Activated naive CD4-positive, alpha-beta T cell treated with anti-CD3 and anti-CD28 coated beads for 36 hours (primary cell): ENCODE measurements at regions of chr12 and their contacts with region 1.

Region 1: GRCh38 chr12:112978163-112979040 is at the start of gene OAS2:
- DNase-seq: peak; percentile 93
- H3K4me3 Mint-ChIP-seq: peak within 1 kb of the TSS; percentile 81
- H3K27ac Mint-ChIP-seq: peak within 1 kb of the TSS; percentile 100
- H3K4me1 Mint-ChIP-seq: peaks cover 36% of the 10 kb centered on the region
- H3K27me3 Mint-ChIP-seq: no peaks in the 10 kb centered on the region
- total RNA-seq, gene OAS2: 191 to 196 TPM

Region 2: DNA sequence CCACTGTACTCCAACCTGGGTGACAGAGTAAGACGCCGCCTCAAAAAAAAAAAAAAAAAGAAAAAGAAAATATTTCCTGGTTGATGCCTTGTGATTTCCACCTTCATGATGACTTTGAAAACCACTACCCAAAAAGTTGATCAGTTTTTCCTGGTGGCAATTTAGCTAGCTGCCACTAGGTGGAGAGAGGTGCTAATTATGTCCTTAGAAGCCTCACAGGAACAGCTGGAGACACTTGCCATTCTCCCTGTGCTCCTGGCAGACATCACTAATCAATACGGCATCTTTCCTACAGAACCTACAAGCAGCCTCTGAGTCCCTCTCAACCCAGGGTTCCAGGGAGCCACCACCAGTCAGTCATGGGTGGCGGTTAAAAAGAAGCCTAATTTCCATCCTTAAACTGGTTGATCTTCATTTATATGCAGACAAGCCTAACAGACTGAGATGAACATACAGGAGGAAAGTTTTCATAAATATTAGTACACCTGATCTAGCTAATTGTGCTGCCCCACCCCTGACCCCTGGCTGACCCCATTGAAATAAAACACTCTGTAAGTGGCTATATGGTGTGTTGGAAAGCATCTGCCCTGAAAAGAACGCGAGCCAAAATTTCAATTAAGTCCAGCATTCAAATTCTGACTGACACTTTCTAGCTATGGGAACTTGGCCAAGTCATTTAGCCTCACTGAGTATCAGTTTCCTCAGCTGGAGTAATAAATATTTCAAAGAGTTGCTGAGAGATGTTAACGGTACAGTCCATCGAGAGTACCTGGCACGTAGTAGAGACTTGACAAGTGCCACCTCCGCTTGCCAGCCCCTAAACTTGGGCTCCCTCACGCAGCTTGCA is 77.9 kb before region 1 on chr12:
- CTCF ChIA-PET with region 1: interaction called, 11 read pairs
- intact Hi-C with region 1: loop called (anchors 1 kb)
- DNase-seq: peak; percentile 65
- H3K4me3 Mint-ChIP-seq: no peak overlapping the region
- H3K27ac Mint-ChIP-seq: no peak overlapping the region
- H3K4me1 Mint-ChIP-seq: peaks cover 18% of the 10 kb centered on the region
- H3K27me3 Mint-ChIP-seq: no peaks in the 10 kb centered on the region

Region 3: DNA sequence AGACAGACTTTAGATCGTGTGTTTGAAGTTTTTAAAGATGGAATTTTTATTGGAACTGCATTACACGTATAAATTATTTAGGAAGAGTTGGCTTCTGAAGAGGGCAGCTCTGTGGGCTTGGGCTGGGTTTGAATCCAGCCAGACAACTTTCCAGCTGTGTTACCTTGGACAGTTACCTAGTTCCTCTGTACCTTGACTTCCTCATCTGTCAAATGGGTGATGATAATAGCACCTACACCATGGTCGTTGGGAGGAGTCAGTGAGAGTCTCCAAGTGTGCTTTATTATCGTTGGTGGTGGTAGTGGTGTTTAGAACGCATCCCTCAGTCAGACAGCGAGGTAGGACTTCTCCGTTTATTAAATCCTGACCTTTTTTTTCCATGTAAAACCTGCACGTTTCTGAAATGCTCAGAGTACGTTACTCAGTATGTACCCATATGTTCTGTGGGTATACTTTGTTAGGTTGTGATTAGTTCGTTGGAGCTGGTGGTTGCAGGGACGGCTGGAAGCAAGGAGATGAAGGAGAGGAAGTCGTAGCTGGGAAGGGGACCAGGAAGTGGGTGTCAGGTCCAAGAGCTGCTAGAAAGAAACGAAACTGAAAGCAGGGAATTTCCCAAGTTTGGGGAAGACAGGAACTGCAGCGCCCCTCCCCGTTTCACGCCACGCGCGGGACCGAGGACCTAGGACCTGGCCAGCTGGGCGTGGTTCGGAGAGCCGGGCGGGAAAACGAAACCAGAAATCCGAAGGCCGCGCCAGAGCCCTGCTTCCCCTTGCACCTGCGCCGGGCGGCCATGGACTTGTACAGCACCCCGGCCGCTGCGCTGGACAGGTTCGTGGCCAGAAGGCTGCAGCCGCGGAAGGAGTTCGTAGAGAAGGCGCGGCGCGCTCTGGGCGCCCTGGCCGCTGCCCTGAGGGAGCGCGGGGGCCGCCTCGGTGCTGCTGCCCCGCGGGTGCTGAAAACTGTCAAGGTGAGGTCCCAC is 40.4 kb before region 1 on chr12 and contains the start of gene OAS3:
- CTCF ChIA-PET with region 1: interaction called, 4 read pairs
- intact Hi-C with region 1: loop called (anchors 1 kb)
- DNase-seq: peak; percentile 61
- H3K4me3 Mint-ChIP-seq: peak within 1 kb of the TSS; percentile 80
- H3K27ac Mint-ChIP-seq: peak within 1 kb of the TSS; percentile 67
- H3K4me1 Mint-ChIP-seq: peaks cover 31% of the 10 kb centered on the region
- H3K27me3 Mint-ChIP-seq: no peaks in the 10 kb centered on the region
- total RNA-seq, gene OAS3: 26.1 to 28.0 TPM

Region 4: DNA sequence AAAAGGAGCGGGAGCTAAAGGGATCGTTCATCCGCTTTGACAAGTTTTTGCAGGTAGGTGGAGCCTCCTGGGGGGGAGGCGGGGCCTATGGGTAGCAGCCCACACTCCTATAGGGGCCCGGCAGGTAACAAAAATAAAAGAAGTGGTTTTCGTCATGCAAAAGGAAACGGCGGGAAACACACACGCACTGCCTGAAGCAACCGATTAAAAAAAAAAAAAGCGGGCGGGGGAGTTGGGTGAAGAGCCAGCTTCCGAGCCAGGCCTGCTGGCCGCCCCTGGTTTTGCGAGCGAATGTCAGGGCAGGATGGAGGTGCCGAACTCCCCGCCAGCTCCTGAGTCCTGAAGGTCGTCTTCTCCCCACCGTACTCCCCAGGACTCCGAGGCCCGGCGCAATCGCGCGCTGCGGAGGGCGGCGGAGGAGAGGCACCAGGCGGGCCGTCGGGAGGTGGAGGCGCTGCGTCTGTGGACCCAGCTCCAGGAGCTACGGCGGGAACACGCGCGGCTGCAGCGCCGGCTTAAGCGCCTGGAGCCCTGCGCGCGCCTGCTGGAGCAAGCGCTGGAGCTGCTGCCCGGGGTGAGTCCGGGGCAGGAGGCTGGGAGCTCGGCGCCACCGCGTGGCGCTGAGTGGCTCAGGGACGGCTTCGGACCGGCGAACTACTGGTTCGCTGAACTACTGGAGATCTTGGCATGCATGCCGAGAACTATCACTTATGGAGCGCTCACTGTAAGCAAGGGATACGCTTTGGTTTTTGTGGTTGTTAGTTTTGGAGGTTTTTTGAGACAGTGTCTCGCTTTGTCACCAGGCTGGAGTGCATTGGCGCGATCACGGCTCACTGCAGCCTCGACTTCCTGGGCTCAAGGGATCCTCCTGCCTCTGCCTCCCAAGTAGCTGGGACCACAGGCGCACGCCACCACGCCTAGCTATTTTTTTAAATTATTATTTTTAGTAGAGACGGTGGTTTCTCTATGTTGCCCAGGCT is 174.7 kb after region 1 on chr12:
- CTCF ChIA-PET with region 1: interaction called, 4 read pairs
- intact Hi-C with region 1: loop called (anchors 5 kb)
- DNase-seq: peak; percentile 85
- H3K4me3 Mint-ChIP-seq: peak overlapping the region; percentile 75
- H3K27ac Mint-ChIP-seq: no peak overlapping the region
- H3K4me1 Mint-ChIP-seq: peaks cover 17% of the 10 kb centered on the region
- H3K27me3 Mint-ChIP-seq: peaks cover 7% of the 10 kb centered on the region

Region 5: GRCh38 chr12:113261847-113262470 is 283.6 kb after region 1 on chr12:
- CTCF ChIA-PET with region 1: no interaction called
- intact Hi-C with region 1: loop called (anchors 5 kb)
- DNase-seq: peak; percentile 79
- H3K4me3 Mint-ChIP-seq: peak overlapping the region; percentile 18
- H3K27ac Mint-ChIP-seq: peak overlapping the region; percentile 79
- H3K4me1 Mint-ChIP-seq: peaks cover 53% of the 10 kb centered on the region
- H3K27me3 Mint-ChIP-seq: no peaks in the 10 kb centered on the region